CD8-positive, alpha-beta memory T cell (primary cell): ENCODE measurements at regions of chr22 and their contacts with region 1.

Region 1: DNA sequence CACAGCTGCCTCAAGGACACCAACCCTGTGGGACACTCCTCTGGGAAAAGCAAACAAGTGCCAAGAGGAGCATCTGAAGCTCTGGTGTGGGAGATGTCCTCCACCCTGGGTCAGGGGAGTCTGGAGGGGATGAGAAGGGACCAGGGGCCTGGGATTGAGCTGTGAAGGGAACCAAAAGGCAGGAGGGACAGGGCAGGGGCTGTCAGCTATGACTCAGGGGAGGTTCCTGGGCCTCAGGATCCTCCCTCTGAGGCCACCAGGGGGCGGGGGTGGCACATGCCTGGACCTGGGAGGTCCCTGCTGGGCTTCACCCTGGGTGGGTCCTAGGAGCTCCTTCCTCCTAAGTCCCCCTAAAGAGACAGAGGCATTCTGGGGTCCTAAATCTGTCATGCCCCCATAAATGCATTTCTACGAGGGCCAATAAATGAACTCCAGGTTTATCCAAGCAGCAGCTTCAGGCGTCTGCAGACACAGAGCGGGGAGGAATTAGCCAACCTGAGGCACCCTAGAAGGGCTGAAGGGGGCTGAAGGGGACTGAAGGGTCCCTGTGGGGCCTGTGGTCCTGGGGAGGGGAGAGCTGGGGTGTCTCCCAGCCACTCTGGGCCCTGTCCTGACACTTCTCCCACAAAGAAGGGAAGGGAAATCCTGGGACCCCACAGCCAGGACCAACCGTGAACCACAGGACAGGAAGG is 31.9 kb upstream of the IGLL5 start:
- DNase-seq: peak; percentile 5 to 65 (median 21)
- H3K4me3 ChIP-seq: no peak overlapping the region
- H3K4me3 Mint-ChIP-seq: no peak overlapping the region
- H3K27ac ChIP-seq: no peak overlapping the region
- H3K27ac Mint-ChIP-seq: peak overlapping the region in 4 of 8 donors; percentile 42 to 74 (median 64)
- H3K4me1 ChIP-seq: no peaks in the 10 kb centered on the region
- H3K4me1 Mint-ChIP-seq: peaks cover 14 to 31% (median 17%) of the 10 kb centered on the region in 3 donors
- H3K27me3 ChIP-seq: no peaks in the 10 kb centered on the region
- H3K27me3 Mint-ChIP-seq: peaks cover 0 to 2% of the 10 kb centered on the region in 2 donors

Region 2: GRCh38 chr22:22818861-22819855 is 36.6 kb before region 1 on chr22:
- CTCF ChIA-PET with region 1: interaction called, 184 read pairs
- POLR2A ChIA-PET with region 1: interaction called, 4 read pairs
- DNase-seq: peak in 3 of 5 donors; percentile 38 to 74 (median 62)
- H3K4me3 ChIP-seq: peak overlapping the region; percentile 28
- H3K4me3 Mint-ChIP-seq: peak overlapping the region; percentile 75 to 92 (median 86)
- H3K27ac ChIP-seq: peak overlapping the region; percentile 3
- H3K27ac Mint-ChIP-seq: peak overlapping the region; percentile 75 to 97 (median 88)
- H3K4me1 ChIP-seq: peaks cover 90% of the 10 kb centered on the region
- H3K4me1 Mint-ChIP-seq: peaks cover 97 to 99% (median 99%) of the 10 kb centered on the region in 3 donors
- H3K27me3 ChIP-seq: no peaks in the 10 kb centered on the region
- H3K27me3 Mint-ChIP-seq: no peaks in the 10 kb centered on the region

Region 3: GRCh38 chr22:22870577-22871404 is 15.0 kb after region 1 on chr22:
- CTCF ChIA-PET with region 1: interaction called, 13 read pairs
- POLR2A ChIA-PET with region 1: interaction called, 3 read pairs
- DNase-seq: no peak
- H3K4me3 ChIP-seq: no peak overlapping the region
- H3K4me3 Mint-ChIP-seq: no peak overlapping the region
- H3K27ac ChIP-seq: no peak overlapping the region
- H3K27ac Mint-ChIP-seq: peak overlapping the region in 3 of 8 donors; percentile 37 to 83 (median 38)
- H3K4me1 ChIP-seq: peaks cover 9% of the 10 kb centered on the region
- H3K4me1 Mint-ChIP-seq: peaks cover 28 to 39% (median 29%) of the 10 kb centered on the region in 3 donors
- H3K27me3 ChIP-seq: no peaks in the 10 kb centered on the region
- H3K27me3 Mint-ChIP-seq: peaks cover 0 to 4% of the 10 kb centered on the region in 2 donors